Activated CD4-positive, alpha-beta T cell treated with anti-CD3 and anti-CD28 coated beads for 36 hours (primary cell): ENCODE measurements at regions of chr5 and their contacts with region 1.

Region 1: GRCh38 chr5:149357370-149358293 is at the start of gene PCYOX1L:
- DNase-seq: peak; percentile 96
- ATAC-seq: peak; percentile 98
- H3K4me3 Mint-ChIP-seq: peak within 1 kb of the TSS; percentile 94
- H3K27ac Mint-ChIP-seq: peak within 1 kb of the TSS; percentile 89
- H3K4me1 Mint-ChIP-seq: peaks cover 66% of the 10 kb centered on the region
- H3K27me3 Mint-ChIP-seq: no peaks in the 10 kb centered on the region
- total RNA-seq, gene PCYOX1L: 17.5 to 18.8 TPM

Region 2: DNA sequence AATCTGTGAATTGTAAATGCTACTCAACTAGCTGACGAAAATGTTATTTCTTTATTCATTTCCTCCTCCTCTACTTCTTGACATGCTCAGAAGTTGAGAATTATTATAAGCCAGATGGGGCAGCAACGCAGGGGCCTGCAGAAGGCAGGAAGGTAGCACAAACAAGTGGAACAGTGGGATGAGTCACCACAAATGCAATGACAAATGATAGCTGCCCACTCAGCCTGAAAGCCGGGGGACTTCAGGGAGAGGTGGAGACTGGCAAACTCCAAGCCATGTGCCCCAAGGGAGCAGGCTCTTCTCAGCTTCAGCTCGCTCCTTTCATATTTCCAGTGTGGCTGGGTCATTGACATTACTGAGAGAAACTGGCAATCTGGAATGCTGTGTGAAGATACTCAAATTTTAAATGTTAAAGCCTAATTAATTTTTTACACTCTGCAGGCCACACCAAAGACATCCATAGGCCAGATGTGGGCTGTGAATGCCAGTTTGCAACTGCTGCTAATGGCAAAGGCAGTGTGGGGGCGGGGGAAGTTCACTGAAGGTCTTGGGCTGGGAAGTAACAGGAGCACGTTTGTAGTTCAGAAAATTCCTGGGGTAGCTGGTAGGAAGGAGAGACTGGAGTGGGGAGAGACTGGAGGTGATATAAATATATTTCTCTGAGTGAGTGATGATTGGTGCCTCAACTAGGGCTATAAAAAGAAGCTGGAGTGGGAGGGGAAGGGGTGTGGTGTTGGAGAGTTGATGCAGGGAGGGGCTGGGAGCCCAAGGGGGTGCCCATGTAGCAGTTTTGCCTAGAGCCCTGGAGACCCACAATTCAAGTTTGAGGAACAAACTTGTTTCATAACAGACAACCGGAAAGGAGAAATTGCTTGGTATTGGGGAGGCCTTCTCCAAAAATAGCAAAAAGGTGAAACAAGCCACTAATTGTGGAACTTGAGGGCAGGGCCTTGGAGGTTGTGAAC is 552.0 kb before region 1 on chr5:
- CTCF ChIA-PET with region 1: no interaction called
- POLR2A ChIA-PET with region 1: no interaction called
- intact Hi-C with region 1: loop called in 1 of 2 experiments (anchors 5 kb)
- DNase-seq: peak; percentile 62
- ATAC-seq: peak; percentile 60
- H3K4me3 Mint-ChIP-seq: no peak overlapping the region
- H3K27ac Mint-ChIP-seq: peak overlapping the region; percentile 21
- H3K4me1 Mint-ChIP-seq: peaks cover 40% of the 10 kb centered on the region
- H3K27me3 Mint-ChIP-seq: peaks cover 17% of the 10 kb centered on the region

Region 3: DNA sequence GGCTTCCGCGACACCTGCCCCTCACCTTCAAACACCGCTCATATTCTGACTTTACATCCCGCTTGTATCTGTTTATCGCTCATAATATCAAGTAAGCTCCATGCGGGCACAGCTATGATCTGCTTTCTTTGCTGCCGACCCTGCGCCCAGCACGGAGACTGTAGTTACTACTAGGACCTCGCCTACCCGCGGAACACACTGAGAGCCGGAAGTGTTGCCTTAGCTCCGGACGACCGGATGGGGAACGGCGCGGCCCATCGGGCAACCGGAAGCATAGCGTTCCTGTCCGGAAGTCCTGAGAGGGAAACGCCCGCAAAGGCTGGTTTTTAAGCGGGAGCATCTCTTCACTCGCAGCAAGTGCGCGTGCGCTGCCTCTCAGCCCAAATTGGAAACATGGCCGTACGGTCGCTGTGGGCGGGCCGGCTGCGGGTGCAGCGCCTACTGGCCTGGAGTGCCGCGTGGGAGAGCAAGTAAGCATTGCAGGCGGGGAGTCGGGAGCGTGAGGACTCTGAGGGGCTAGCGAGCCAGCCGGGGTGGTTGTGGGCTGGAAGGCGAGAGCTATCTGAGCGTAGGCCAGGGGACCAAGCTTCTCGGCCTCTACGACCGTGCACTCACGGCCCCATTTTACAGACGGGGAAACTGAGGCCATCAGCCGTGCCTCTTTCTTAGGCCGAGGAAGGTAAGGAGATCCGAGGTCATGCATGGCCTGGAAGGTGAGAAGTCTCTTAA is 12.3 kb before region 1 on chr5 and contains the start of gene GRPEL2:
- CTCF ChIA-PET with region 1: interaction called, 11 read pairs
- POLR2A ChIA-PET with region 1: interaction called, 22 read pairs
- intact Hi-C with region 1: loop called (anchors 1 kb)
- DNase-seq: peak; percentile 97
- ATAC-seq: peak; percentile 89
- H3K4me3 Mint-ChIP-seq: peak within 1 kb of the TSS; percentile 96
- H3K27ac Mint-ChIP-seq: peak within 1 kb of the TSS; percentile 99
- H3K4me1 Mint-ChIP-seq: peaks cover 49% of the 10 kb centered on the region
- H3K27me3 Mint-ChIP-seq: no peaks in the 10 kb centered on the region
- total RNA-seq, gene GRPEL2: 27.1 to 37.2 TPM

Region 4: GRCh38 chr5:149406203-149406978 is 48.8 kb after region 1 on chr5:
- CTCF ChIA-PET with region 1: no interaction called
- POLR2A ChIA-PET with region 1: no interaction called
- intact Hi-C with region 1: no loop called
- DNase-seq: no peak
- ATAC-seq: no peak
- H3K4me3 Mint-ChIP-seq: no peak overlapping the region
- H3K27ac Mint-ChIP-seq: no peak overlapping the region
- H3K4me1 Mint-ChIP-seq: no peaks in the 10 kb centered on the region
- H3K27me3 Mint-ChIP-seq: no peaks in the 10 kb centered on the region

Region 5: GRCh38 chr5:149551200-149552037 is 193.8 kb after region 1 on chr5 and contains the start of gene CSNK1A1:
- CTCF ChIA-PET with region 1: interaction called, 6 read pairs
- POLR2A ChIA-PET with region 1: interaction called, 10 read pairs
- intact Hi-C with region 1: loop called in 1 of 2 experiments (anchors 1 kb)
- DNase-seq: peak; percentile 100
- ATAC-seq: peak; percentile 90
- H3K4me3 Mint-ChIP-seq: peak within 1 kb of the TSS; percentile 95
- H3K27ac Mint-ChIP-seq: peak within 1 kb of the TSS; percentile 100
- H3K4me1 Mint-ChIP-seq: peaks cover 27% of the 10 kb centered on the region
- H3K27me3 Mint-ChIP-seq: no peaks in the 10 kb centered on the region
- total RNA-seq, gene CSNK1A1: 169 to 203 TPM

Region 6: GRCh38 chr5:149731639-149732323 is 374.1 kb after region 1 on chr5:
- CTCF ChIA-PET with region 1: no interaction called
- POLR2A ChIA-PET with region 1: no interaction called
- intact Hi-C with region 1: loop called in 1 of 2 experiments (anchors 5 kb)
- DNase-seq: peak; percentile 90
- ATAC-seq: peak; percentile 48
- H3K4me3 Mint-ChIP-seq: peak overlapping the region; percentile 79
- H3K27ac Mint-ChIP-seq: no peak overlapping the region
- H3K4me1 Mint-ChIP-seq: peaks cover 2% of the 10 kb centered on the region
- H3K27me3 Mint-ChIP-seq: no peaks in the 10 kb centered on the region

Region 7: DNA sequence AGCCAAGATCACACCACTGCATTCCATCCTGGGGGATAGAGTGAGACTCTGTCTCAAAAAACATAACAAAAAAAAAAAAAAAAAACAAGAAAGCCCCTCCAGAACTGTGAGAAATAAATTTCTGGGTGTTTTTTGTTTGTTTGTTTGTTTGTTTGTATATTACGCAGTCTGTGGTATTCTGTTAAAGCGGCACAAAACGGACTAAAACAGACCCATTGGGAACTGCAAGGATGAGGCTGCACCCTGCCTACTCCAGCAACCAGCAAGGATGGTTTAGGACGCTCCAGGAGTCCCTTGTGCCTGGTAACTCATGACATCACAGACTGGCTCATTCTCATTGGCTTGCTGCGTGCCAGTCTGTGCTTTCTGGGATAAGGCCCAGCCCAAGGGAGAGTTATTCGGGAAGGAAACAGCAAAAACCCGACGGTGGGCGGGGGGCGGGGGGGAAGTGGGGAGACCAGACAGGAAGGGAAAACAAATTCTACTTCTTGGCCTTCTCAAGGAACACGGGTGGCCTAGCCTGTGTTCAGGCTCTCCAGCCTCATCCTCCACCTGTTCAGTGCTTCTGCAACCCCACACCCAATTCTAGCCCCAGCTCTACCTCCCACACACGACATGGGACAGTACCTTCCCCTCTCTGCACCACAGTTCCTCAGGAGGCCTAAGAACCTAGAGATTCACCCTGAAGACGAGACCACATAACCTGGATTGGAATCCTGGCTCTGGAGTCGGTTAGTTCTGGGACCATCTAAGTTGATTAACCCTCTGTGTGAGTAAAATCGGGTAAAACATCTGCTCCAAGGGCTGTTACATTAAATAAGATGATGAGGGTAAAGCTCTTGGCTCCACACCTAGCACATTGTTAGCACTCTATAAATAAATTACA is 1052.2 kb after region 1 on chr5:
- CTCF ChIA-PET with region 1: no interaction called
- POLR2A ChIA-PET with region 1: no interaction called
- intact Hi-C with region 1: loop called in 1 of 2 experiments (anchors 2 kb)
- DNase-seq: peak; percentile 66
- ATAC-seq: peak; percentile 40
- H3K4me3 Mint-ChIP-seq: peak overlapping the region; percentile 99
- H3K27ac Mint-ChIP-seq: peak overlapping the region; percentile 99
- H3K4me1 Mint-ChIP-seq: peaks cover 36% of the 10 kb centered on the region
- H3K27me3 Mint-ChIP-seq: no peaks in the 10 kb centered on the region